ENCODE measurements at regions of chr3 and their contacts with region 1.

Region 1: GRCh38 chr3:28134792-28135375 is 106.5 kb upstream of the CMC1 start:
- DNase-seq: peak; percentile 83
- ATAC-seq: peak; percentile 92
- H3K4me3 ChIP-seq: peak overlapping the region in 1 of 3 experiments; percentile 9; a peak in 1 of 6 replicates
- H3K27ac ChIP-seq: peak overlapping the region; percentile 10
- H3K4me1 ChIP-seq: peaks cover 56% of the 10 kb centered on the region
- H3K27me3 ChIP-seq: no peaks in the 10 kb centered on the region
- CTCF ChIP-seq: no peak
- EP300 ChIP-seq: peak in 1 of 2 experiments; percentile 63; a peak in 2 of 4 replicates
- POLR2A ChIP-seq: no peak
- RAD21 ChIP-seq: no peak

Region 2: GRCh38 chr3:28114893-28115292 is 20.0 kb before region 1 on chr3:
- CTCF ChIA-PET with region 1: no interaction called
- POLR2A ChIA-PET with region 1: interaction called, 9 read pairs
- in situ Hi-C with region 1: no loop called
- intact Hi-C with region 1: loop called (anchors 2 kb)
- DNase-seq: peak; percentile 90
- ATAC-seq: peak; percentile 100
- H3K4me3 ChIP-seq: no peak overlapping the region
- H3K27ac ChIP-seq: peak overlapping the region; percentile 47
- H3K4me1 ChIP-seq: peaks cover 38% of the 10 kb centered on the region
- H3K27me3 ChIP-seq: no peaks in the 10 kb centered on the region
- CTCF ChIP-seq: no peak
- EP300 ChIP-seq: peak in 1 of 2 experiments; percentile 93; a peak in 2 of 4 replicates
- POLR2A ChIP-seq: no peak
- RAD21 ChIP-seq: no peak